Activated B cell treated with CpG ODN at 0.5 μM for 24 hours (primary cell): ENCODE measurements at regions of chr12 and their contacts with region 1.

Region 1: DNA sequence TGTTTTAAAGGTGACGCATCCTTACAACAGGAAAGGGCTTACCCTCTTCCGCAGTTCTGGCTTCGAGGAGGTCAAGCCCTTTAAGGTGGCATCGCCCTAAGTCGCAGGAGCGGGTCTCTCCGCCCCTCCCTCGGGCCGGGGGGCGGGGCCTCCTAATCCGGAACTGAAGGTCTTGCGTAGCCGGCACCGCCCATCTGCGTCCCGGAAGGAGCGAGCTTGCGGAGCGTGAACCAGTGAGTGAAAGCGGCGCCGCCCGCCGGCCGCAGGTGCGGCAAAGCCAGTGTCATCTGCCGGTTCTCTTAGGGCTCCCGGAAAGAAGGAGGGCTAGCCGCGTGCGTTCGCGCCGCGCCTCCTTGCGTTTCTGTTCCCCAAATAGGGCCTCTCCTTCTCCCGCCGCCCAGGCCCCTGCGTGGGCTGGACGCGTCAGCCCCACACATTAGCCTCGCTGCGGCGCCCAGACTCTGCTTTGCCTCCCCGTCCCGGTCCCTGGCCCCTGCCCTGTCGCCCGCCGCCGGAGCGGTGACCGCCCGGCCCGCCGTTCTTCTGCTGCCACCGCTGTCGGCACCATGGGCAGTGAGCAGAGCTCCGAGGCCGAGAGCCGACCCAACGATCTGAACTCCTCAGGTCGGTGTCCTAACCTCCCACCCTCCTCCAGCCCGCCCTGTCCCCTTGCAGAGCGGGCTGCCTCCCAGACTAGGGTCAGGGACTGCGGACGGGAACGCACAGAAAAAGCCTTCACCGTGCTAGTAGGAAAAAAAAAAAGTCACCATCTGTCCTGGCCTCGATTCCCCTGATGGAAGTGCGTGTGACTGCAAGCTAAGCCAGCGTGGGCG is at the start of gene BORCS5:
- DNase-seq: peak; percentile 99
- ATAC-seq: peak; percentile 90
- H3K4me3 Mint-ChIP-seq: peak within 1 kb of the TSS; percentile 92
- H3K27ac Mint-ChIP-seq: peak within 1 kb of the TSS; percentile 98
- H3K4me1 Mint-ChIP-seq: peaks cover 38% of the 10 kb centered on the region
- H3K27me3 Mint-ChIP-seq: no peaks in the 10 kb centered on the region
- CTCF ChIP-seq: no peak
- total RNA-seq, gene BORCS5: 19.5 and 22.7 TPM in 2 replicates

Region 2: GRCh38 chr12:10364815-10365622 is 1992.1 kb before region 1 on chr12:
- CTCF ChIA-PET with region 1: no interaction called
- POLR2A ChIA-PET with region 1: no interaction called
- intact Hi-C with region 1: loop called (anchors 5 kb)
- DNase-seq: peak; percentile 35
- ATAC-seq: peak; percentile 73
- H3K4me3 Mint-ChIP-seq: no peak overlapping the region
- H3K27ac Mint-ChIP-seq: no peak overlapping the region
- H3K4me1 Mint-ChIP-seq: peaks cover 7% of the 10 kb centered on the region
- H3K27me3 Mint-ChIP-seq: no peaks in the 10 kb centered on the region
- CTCF ChIP-seq: no peak

Region 3: GRCh38 chr12:11648831-11649702 is 708.0 kb before region 1 on chr12 and contains the start of gene ETV6:
- CTCF ChIA-PET with region 1: no interaction called
- POLR2A ChIA-PET with region 1: interaction called, 8 read pairs
- intact Hi-C with region 1: loop called (anchors 1 kb)
- DNase-seq: peak; percentile 72
- ATAC-seq: peak; percentile 54
- H3K4me3 Mint-ChIP-seq: peak within 1 kb of the TSS; percentile 99
- H3K27ac Mint-ChIP-seq: peak within 1 kb of the TSS; percentile 98
- H3K4me1 Mint-ChIP-seq: peaks cover 30% of the 10 kb centered on the region
- H3K27me3 Mint-ChIP-seq: no peaks in the 10 kb centered on the region
- CTCF ChIP-seq: no peak
- total RNA-seq, gene ETV6: 116 and 130 TPM in 2 replicates

Region 4: GRCh38 chr12:12562585-12563261 is 205.6 kb after region 1 on chr12 and contains the start of gene DUSP16:
- CTCF ChIA-PET with region 1: no interaction called
- POLR2A ChIA-PET with region 1: interaction called, 12 read pairs
- intact Hi-C with region 1: loop called (anchors 1 kb)
- DNase-seq: peak; percentile 65
- ATAC-seq: peak; percentile 68
- H3K4me3 Mint-ChIP-seq: peak within 1 kb of the TSS; percentile 84
- H3K27ac Mint-ChIP-seq: peak within 1 kb of the TSS; percentile 79
- H3K4me1 Mint-ChIP-seq: peaks cover 15% of the 10 kb centered on the region
- H3K27me3 Mint-ChIP-seq: peaks cover 3% of the 10 kb centered on the region
- CTCF ChIP-seq: no peak
- total RNA-seq, gene DUSP16: 1.1 and 2.0 TPM in 2 replicates

Region 5: GRCh38 chr12:12716793-12717585 is 359.9 kb after region 1 on chr12 and contains the start of gene CDKN1B:
- CTCF ChIA-PET with region 1: interaction called, 3 read pairs
- POLR2A ChIA-PET with region 1: interaction called, 339 read pairs
- intact Hi-C with region 1: loop called (anchors 1 kb)
- DNase-seq: peak; percentile 75
- ATAC-seq: peak; percentile 70
- H3K4me3 Mint-ChIP-seq: peak within 1 kb of the TSS; percentile 98
- H3K27ac Mint-ChIP-seq: peak within 1 kb of the TSS; percentile 97
- H3K4me1 Mint-ChIP-seq: peaks cover 67% of the 10 kb centered on the region
- H3K27me3 Mint-ChIP-seq: no peaks in the 10 kb centered on the region
- CTCF ChIP-seq: no peak
- total RNA-seq, gene CDKN1B: 56.6 and 59.0 TPM in 2 replicates

Region 6: DNA sequence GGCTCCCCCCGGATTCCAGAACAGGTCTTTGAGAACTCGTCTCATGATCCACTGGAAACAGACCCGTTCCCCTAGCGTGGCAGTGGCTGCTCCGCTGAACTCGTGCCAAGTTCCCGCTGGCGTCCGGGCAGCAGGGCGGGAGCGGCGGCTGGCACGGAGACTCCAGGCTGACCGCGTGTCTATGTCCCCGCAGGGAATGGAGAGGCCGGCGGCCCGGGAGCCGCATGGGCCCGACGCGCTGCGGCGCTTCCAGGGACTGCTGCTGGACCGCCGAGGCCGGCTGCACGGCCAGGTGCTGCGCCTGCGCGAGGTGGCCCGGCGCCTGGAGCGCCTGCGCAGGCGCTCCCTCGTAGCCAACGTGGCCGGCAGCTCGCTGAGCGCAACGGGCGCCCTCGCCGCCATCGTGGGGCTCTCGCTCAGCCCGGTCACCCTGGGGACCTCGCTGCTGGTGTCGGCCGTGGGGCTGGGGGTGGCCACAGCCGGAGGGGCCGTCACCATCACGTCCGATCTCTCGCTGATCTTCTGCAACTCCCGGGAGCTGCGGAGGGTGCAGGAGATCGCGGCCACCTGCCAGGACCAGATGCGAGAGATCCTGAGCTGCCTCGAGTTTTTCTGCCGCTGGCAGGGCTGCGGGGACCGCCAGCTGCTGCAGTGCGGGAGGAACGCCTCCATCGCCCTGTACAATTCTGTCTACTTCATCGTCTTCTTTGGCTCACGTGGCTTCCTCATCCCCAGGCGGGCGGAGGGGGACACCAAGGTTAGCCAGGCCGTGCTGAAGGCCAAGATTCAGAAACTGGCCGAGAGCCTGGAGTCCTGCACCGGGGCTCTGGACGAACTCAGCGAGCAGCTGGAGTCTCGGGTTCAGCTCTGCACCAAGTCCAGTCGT is 429.9 kb after region 1 on chr12:
- CTCF ChIA-PET with region 1: no interaction called
- POLR2A ChIA-PET with region 1: interaction called, 13 read pairs
- intact Hi-C with region 1: loop called (anchors 5 kb)
- DNase-seq: peak; percentile 73
- ATAC-seq: peak; percentile 92
- H3K4me3 Mint-ChIP-seq: peak overlapping the region; percentile 87
- H3K27ac Mint-ChIP-seq: peak overlapping the region; percentile 86
- H3K4me1 Mint-ChIP-seq: peaks cover 23% of the 10 kb centered on the region
- H3K27me3 Mint-ChIP-seq: no peaks in the 10 kb centered on the region
- CTCF ChIP-seq: no peak

Region 7: DNA sequence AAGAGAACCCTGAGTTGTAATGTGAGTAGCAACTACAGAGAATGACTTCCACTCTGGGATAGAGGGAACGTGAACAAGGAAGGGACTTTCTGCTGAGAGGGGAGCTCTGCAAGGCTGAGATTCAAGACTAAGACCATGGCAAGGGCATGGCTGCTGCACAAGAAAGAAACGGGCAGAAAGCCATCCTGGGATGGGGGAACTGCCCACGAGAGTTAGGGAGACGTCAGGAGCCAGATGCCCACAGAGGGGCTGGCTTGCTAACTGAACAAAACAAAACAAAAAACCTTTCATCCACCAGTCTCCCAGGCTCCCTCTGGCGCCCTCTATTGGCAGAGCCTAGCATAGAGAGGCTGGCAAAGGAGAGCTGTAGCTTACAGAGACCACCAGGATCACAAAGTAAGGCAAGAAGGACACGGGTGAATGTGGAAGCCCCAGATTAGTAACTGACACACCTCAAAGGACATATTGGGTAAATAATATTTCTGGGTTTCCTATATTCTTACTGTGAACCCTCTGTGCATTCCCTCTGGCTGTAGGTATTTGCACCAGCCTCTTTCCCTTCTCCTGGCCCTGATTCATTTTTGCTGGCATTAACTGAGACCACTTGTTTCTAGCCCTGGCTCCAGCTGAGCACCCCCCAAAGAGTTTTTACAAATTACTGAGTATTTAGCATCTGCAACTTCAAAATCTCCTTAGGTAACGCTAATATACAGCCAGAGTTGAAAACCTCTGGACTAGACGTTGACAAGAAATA is 1177.7 kb after region 1 on chr12:
- CTCF ChIA-PET with region 1: no interaction called
- POLR2A ChIA-PET with region 1: no interaction called
- intact Hi-C with region 1: loop called (anchors 10 kb)
- DNase-seq: peak; percentile 24
- ATAC-seq: no peak
- H3K4me3 Mint-ChIP-seq: no peak overlapping the region
- H3K27ac Mint-ChIP-seq: no peak overlapping the region
- H3K4me1 Mint-ChIP-seq: peaks cover 48% of the 10 kb centered on the region
- H3K27me3 Mint-ChIP-seq: no peaks in the 10 kb centered on the region
- CTCF ChIP-seq: no peak